Common myeloid progenitor, CD34-positive (primary cell): ENCODE measurements at regions of chr6 and their contacts with region 1.

Region 1: DNA sequence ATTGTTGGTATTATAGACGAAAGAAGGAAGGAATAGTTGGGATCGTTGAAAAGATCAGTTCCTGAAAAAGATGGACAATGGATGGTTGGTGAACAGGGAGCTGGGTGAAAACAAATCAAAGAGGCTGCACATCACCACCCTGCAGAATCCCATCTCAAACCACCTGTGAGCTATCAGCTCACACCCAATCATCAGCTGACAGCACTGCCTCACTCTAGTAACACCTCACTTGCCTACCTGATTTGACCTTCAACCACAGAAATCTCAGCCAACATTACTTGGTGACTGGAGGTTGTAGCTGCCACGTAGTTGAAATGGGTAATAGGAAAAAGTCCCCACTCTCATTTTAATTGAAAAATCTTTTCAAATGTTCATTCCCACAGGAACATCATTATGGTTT is 101.8 kb upstream of the DST start:
- DNase-seq: no peak
- H3K4me3 ChIP-seq: no peak overlapping the region
- H3K27ac ChIP-seq: no peak overlapping the region
- H3K4me1 ChIP-seq: peaks cover 0 to 3% (median 1%) of the 10 kb centered on the region in 4 experiments
- H3K27me3 ChIP-seq: no peaks in the 10 kb centered on the region

Region 2: DNA sequence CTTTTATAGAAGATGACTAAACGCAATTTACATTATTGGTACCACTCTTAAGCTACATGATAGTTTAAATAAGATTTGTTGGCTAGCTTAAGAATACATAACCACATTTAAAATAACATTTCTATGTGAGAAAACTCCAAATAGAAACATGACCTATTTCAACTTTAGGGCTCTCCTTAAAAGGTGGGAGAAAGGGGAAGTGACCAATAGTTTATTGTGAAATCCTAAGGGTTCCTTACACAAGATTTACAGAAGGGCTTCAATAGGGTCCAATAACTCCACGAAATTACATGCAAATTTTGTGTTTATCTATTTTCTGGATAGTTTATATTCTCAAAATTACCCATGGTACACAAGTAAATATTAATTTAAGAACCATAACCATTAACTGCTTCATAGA is 10.2 kb before region 1 on chr6:
- CTCF ChIA-PET with region 1: interaction called, 13 read pairs
- POLR2A ChIA-PET with region 1: interaction called, 3 read pairs
- DNase-seq: peak in 1 of 3 donors; percentile 31
- H3K4me3 ChIP-seq: no peak overlapping the region
- H3K27ac ChIP-seq: no peak overlapping the region
- H3K4me1 ChIP-seq: peaks cover 0 to 2% (median 0%) of the 10 kb centered on the region in 4 experiments
- H3K27me3 ChIP-seq: no peaks in the 10 kb centered on the region